ENCODE measurements at regions of chr4 and their contacts with region 1.

Region 1: GRCh38 chr4:139554893-139555704 is 920 bp downstream of the SETD7 start:
- DNase-seq: peak; percentile 92
- H3K4me3 Mint-ChIP-seq: peak overlapping the region; percentile 94
- H3K27ac Mint-ChIP-seq: peak overlapping the region; percentile 90
- H3K4me1 Mint-ChIP-seq: peaks cover 41% of the 10 kb centered on the region
- H3K27me3 Mint-ChIP-seq: no peaks in the 10 kb centered on the region

Region 2: GRCh38 chr4:139027776-139028175 is 527.3 kb before region 1 on chr4:
- CTCF ChIA-PET with region 1: no interaction called
- intact Hi-C with region 1: no loop called
- DNase-seq: no peak
- H3K4me3 Mint-ChIP-seq: no peak overlapping the region
- H3K27ac Mint-ChIP-seq: no peak overlapping the region
- H3K4me1 Mint-ChIP-seq: peaks cover 10% of the 10 kb centered on the region
- H3K27me3 Mint-ChIP-seq: no peaks in the 10 kb centered on the region

Region 3: DNA sequence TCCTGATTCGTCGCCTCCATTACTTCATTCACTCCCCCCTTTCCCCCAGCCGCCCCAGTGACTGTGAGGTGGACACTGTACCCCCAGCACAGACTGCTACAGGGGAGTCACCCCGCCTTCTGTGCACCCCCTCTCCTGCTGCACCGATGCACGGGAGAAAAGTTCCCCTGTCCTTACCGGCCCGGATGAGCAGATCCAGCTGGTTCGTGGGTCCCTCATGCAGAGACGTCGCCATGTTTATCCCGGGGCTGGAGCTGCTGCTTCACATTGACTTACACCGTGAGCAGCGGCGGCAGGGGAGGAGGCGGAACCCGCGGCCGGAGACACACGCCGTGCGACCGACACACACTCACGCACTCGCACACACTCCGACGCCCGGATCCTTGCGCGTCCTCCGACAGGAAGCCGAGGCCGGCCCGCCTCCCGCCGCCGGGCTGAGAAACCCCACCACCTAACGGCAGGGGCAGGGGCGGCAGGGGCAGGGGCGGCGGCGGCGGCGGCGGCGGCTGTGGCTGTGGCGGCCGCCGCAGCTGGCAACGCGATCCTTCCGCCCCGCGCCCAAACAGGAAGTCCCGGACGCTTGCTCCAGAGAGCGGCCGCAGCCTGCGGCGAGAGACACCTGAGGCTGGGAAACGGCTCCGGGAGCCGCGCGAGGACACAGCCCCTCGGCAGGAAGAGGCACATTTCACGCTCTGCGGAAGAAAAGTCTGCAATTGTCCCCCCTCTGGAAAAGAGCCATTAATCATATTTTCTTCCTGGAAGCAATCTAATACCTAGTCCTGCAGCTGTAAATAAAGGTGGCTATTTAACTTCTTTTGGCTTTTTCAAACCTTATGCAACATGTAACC is 470.9 kb before region 1 on chr4:
- CTCF ChIA-PET with region 1: no interaction called
- intact Hi-C with region 1: loop called (anchors 1 kb)
- DNase-seq: peak; percentile 90
- H3K4me3 Mint-ChIP-seq: peak overlapping the region; percentile 99
- H3K27ac Mint-ChIP-seq: peak overlapping the region; percentile 99
- H3K4me1 Mint-ChIP-seq: peaks cover 30% of the 10 kb centered on the region
- H3K27me3 Mint-ChIP-seq: no peaks in the 10 kb centered on the region

Region 4: GRCh38 chr4:139416073-139416673 is 138.9 kb before region 1 on chr4:
- CTCF ChIA-PET with region 1: interaction called, 3 read pairs
- intact Hi-C with region 1: loop called (anchors 2 kb)
- DNase-seq: peak; percentile 10
- H3K4me3 Mint-ChIP-seq: no peak overlapping the region
- H3K27ac Mint-ChIP-seq: no peak overlapping the region
- H3K4me1 Mint-ChIP-seq: peaks cover 14% of the 10 kb centered on the region
- H3K27me3 Mint-ChIP-seq: no peaks in the 10 kb centered on the region

Region 5: GRCh38 chr4:139651282-139652194 is 96.4 kb after region 1 on chr4:
- CTCF ChIA-PET with region 1: interaction called, 10 read pairs
- intact Hi-C with region 1: loop called (anchors 1 kb)
- DNase-seq: peak; percentile 81
- H3K4me3 Mint-ChIP-seq: no peak overlapping the region
- H3K27ac Mint-ChIP-seq: no peak overlapping the region
- H3K4me1 Mint-ChIP-seq: peaks cover 3% of the 10 kb centered on the region
- H3K27me3 Mint-ChIP-seq: peaks cover 2% of the 10 kb centered on the region

Region 6: DNA sequence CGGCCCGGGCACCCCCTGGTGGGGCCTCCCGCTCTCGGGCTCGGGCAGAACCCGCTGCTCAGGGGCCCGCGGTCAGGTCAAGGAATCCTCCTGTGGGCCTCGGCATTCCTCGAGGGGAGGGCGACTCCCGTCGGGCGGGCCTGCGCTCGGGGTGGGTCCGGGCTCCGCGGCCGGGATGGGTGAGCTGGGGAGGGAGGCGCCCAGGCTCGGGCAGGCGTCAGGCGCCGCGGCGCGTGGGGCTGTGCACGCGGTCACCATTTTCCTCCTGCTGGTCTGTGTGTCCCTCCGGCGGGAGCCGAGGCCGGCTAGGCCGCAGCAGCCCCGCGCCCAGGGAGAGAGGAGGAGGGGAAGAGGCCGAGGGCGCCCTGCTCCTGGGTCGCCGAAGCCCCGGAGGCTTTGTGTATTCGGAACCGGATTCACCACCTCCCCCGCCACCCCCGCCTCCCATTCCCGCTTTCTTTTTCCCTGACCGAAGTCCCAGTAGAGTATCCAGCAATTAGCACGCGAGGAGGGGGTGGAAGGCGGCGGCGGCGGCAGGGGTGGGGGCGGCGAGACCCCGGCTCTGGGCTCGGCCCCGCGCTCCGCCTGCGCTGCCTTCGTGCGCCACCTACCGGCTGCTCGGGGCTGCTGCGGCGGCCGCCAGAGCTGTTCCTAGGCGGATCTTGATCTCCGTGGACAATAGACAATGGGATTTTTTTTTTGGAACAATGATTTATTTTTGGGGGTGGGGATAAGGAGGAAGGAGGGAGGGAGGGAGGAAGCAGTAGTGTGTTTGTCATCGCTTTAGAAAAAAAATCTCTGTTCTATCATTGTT is 697.9 kb after region 1 on chr4:
- CTCF ChIA-PET with region 1: no interaction called
- intact Hi-C with region 1: loop called (anchors 5 kb)
- DNase-seq: peak; percentile 65
- H3K4me3 Mint-ChIP-seq: peak overlapping the region; percentile 5
- H3K27ac Mint-ChIP-seq: no peak overlapping the region
- H3K4me1 Mint-ChIP-seq: peaks cover 11% of the 10 kb centered on the region
- H3K27me3 Mint-ChIP-seq: peaks cover 6% of the 10 kb centered on the region

Measured in activated naive CD4-positive, alpha-beta T cell treated with anti-CD3 and anti-CD28 coated beads for 36 hours (primary cell).